A673 (cell line): ENCODE measurements at regions of chr6 and their contacts with region 1.

Region 1: DNA sequence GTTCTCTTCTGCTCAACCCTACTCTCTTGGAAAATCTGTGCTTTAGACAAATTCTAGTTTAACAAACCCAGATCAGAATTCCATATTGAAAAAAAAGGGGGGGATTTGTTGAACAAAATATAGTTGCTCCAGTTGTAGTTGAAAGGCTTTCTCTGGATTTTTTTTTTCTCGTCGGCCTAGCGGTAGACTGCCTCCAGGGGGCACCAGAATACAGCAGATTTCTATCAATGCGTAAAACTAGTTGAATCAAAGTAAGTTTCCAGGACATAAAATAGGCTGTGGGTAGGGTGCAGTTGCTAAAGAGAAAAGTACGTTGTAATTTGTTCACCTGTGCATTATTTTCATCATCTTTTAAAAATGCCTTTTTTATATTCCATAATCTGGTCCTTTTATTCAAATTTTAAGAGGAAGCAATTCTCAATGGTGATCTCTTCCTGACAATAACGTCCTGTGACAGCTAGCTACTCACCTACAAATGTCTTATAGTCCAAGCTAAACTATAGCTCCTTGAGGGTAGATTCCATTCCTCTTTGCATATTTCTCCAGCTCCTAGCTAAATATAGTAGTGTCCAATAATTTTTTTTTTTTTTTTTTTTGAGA is 105.4 kb downstream of the PERP start:
- DNase-seq: peak; percentile 51
- H3K4me3 ChIP-seq: no peak overlapping the region
- H3K27ac ChIP-seq: no peak overlapping the region
- H3K4me1 ChIP-seq: no peaks in the 10 kb centered on the region
- H3K27me3 ChIP-seq: peaks cover 3% of the 10 kb centered on the region
- CTCF ChIP-seq: peak; percentile 91

Region 2: DNA sequence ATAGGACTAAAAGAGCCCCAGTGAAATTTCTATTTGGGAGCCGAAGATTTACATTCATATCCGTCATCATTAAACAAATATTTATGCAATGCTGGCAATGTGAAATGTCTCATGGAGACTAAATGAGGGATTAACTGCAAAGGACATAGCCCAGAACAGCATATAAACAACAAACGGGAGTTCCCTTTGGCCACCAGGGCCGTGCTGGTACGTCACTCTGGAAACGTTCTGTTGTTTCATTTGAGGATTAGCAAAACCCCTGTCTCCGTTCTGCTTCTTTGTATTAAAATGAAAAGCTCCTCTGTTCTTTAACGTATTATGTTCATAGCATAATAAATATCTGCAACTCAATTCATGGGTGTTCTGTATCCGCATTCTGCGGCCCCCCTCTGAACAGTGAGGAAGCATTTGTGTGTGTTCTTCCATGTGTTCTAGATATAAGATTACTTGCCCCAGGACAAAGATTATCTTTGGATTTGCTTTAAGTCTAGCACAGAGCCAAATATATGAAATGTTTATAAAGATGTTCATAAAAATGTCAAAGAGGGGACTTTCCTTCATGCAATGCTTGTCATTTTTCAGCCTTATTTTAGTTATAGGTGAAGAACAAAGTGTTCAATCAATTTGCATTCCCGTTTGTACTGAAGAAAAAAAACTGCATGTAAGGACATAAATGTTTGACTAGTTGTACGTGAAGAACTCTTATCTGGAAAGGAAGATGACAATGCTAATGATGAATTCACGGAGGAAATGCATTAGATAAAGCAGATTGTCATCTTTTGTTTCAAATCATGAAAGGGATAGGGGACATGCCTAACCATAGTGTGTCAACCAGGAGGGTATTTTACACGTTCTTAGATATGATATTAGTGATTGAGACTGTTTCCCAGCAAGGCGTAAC is 224.8 kb before region 1 on chr6:
- CTCF ChIA-PET with region 1: no interaction called
- POLR2A ChIA-PET with region 1: no interaction called
- intact Hi-C with region 1: no loop called
- DNase-seq: no peak
- H3K4me3 ChIP-seq: no peak overlapping the region
- H3K27ac ChIP-seq: no peak overlapping the region
- H3K4me1 ChIP-seq: no peaks in the 10 kb centered on the region
- H3K27me3 ChIP-seq: no peaks in the 10 kb centered on the region
- CTCF ChIP-seq: no peak

Region 3: GRCh38 chr6:138109042-138109997 is 107.5 kb after region 1 on chr6:
- CTCF ChIA-PET with region 1: interaction called, 6 read pairs
- POLR2A ChIA-PET with region 1: no interaction called
- intact Hi-C with region 1: loop called (anchors 1 kb)
- DNase-seq: peak; percentile 67
- H3K4me3 ChIP-seq: no peak overlapping the region
- H3K27ac ChIP-seq: no peak overlapping the region
- H3K4me1 ChIP-seq: no peaks in the 10 kb centered on the region
- H3K27me3 ChIP-seq: peaks cover 50% of the 10 kb centered on the region
- CTCF ChIP-seq: peak; percentile 94

Region 4: GRCh38 chr6:138278326-138278725 is 276.5 kb after region 1 on chr6:
- CTCF ChIA-PET with region 1: no interaction called
- POLR2A ChIA-PET with region 1: no interaction called
- intact Hi-C with region 1: loop called (anchors 10 kb)
- DNase-seq: peak; percentile 63
- H3K4me3 ChIP-seq: no peak overlapping the region
- H3K27ac ChIP-seq: no peak overlapping the region
- H3K4me1 ChIP-seq: no peaks in the 10 kb centered on the region
- H3K27me3 ChIP-seq: no peaks in the 10 kb centered on the region
- CTCF ChIP-seq: peak; percentile 60